CD8-positive, alpha-beta T cell (primary cell): ENCODE measurements at regions of chr18 and their contacts with region 1.

Region 1: GRCh38 chr18:62186774-62187542 is at the starts of genes PIGN and RELCH:
- DNase-seq: peak; percentile 89 to 99 (median 93)
- ATAC-seq: peak; percentile 91
- H3K4me3 ChIP-seq: peak within 1 kb of the TSS; percentile 92 to 99
- H3K4me3 Mint-ChIP-seq: peak within 1 kb of the TSS; percentile 100
- H3K27ac ChIP-seq: peak within 1 kb of the TSS; percentile 63 to 79
- H3K27ac Mint-ChIP-seq: peak within 1 kb of the TSS; percentile 97
- H3K4me1 ChIP-seq: peaks cover 43% of the 10 kb centered on the region
- H3K4me1 Mint-ChIP-seq: peaks cover 63% of the 10 kb centered on the region
- H3K27me3 ChIP-seq: no peaks in the 10 kb centered on the region
- H3K27me3 Mint-ChIP-seq: no peaks in the 10 kb centered on the region
- CTCF ChIP-seq: no peak
- total RNA-seq, gene PIGN: 8.1 to 9.9 TPM
- total RNA-seq, gene RELCH: 39.2 to 40.5 TPM

Region 2: DNA sequence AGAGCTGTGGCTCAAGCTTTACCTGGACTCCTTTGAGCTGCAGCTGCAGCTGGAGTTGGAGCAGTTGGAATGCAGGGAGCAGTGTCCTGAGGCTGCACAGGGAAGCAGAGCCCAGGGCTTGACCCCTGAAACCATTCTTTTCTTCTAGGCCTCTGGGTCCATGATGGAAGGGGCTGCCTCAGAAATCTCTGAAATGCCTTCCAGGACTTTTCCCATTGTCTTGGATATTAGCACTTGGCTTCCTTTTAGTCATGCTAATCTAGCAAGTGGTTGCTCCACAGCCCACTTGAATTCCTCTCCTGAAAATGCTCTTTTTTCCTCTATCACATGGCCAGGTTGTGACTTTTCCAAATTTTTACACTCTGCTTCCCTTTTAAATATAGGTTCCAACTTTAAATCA is 185.6 kb before region 1 on chr18:
- CTCF ChIA-PET with region 1: no interaction called
- POLR2A ChIA-PET with region 1: no interaction called
- intact Hi-C with region 1: no loop called
- DNase-seq: no peak
- ATAC-seq: no peak
- H3K4me3 ChIP-seq: no peak overlapping the region
- H3K4me3 Mint-ChIP-seq: no peak overlapping the region
- H3K27ac ChIP-seq: no peak overlapping the region
- H3K27ac Mint-ChIP-seq: no peak overlapping the region
- H3K4me1 ChIP-seq: no peaks in the 10 kb centered on the region
- H3K4me1 Mint-ChIP-seq: no peaks in the 10 kb centered on the region
- H3K27me3 ChIP-seq: no peaks in the 10 kb centered on the region
- H3K27me3 Mint-ChIP-seq: peaks cover under 1% of the 10 kb centered on the region
- CTCF ChIP-seq: no peak

Region 3: GRCh38 chr18:62201903-62202302 is 14.9 kb after region 1 on chr18:
- CTCF ChIA-PET with region 1: interaction called, 3 read pairs
- POLR2A ChIA-PET with region 1: interaction called, 6 read pairs
- intact Hi-C with region 1: loop called in 1 of 2 experiments (anchors 2 kb)
- DNase-seq: no peak
- ATAC-seq: no peak
- H3K4me3 ChIP-seq: no peak overlapping the region
- H3K4me3 Mint-ChIP-seq: no peak overlapping the region
- H3K27ac ChIP-seq: no peak overlapping the region
- H3K27ac Mint-ChIP-seq: no peak overlapping the region
- H3K4me1 ChIP-seq: peaks cover 7% of the 10 kb centered on the region
- H3K4me1 Mint-ChIP-seq: peaks cover 61% of the 10 kb centered on the region
- H3K27me3 ChIP-seq: no peaks in the 10 kb centered on the region
- H3K27me3 Mint-ChIP-seq: no peaks in the 10 kb centered on the region
- CTCF ChIP-seq: no peak

Region 4: GRCh38 chr18:62324917-62325805 is 138.2 kb after region 1 on chr18 and contains the start of gene TNFRSF11A:
- CTCF ChIA-PET with region 1: no interaction called
- POLR2A ChIA-PET with region 1: no interaction called
- intact Hi-C with region 1: loop called in 1 of 2 experiments (anchors 5 kb)
- DNase-seq: peak; percentile 35 to 69 (median 61)
- ATAC-seq: peak; percentile 90
- H3K4me3 ChIP-seq: peak within 1 kb of the TSS; percentile 45 to 51
- H3K4me3 Mint-ChIP-seq: peak within 1 kb of the TSS; percentile 80
- H3K27ac ChIP-seq: no peak within 1 kb of the TSS
- H3K27ac Mint-ChIP-seq: no peak within 1 kb of the TSS
- H3K4me1 ChIP-seq: peaks cover 24% of the 10 kb centered on the region
- H3K4me1 Mint-ChIP-seq: peaks cover 26% of the 10 kb centered on the region
- H3K27me3 ChIP-seq: peaks cover 25 to 27% of the 10 kb centered on the region in 2 experiments
- H3K27me3 Mint-ChIP-seq: peaks cover 71% of the 10 kb centered on the region
- CTCF ChIP-seq: peak; percentile 25
- total RNA-seq, gene TNFRSF11A: 0.03 to 0.28 TPM

Region 5: DNA sequence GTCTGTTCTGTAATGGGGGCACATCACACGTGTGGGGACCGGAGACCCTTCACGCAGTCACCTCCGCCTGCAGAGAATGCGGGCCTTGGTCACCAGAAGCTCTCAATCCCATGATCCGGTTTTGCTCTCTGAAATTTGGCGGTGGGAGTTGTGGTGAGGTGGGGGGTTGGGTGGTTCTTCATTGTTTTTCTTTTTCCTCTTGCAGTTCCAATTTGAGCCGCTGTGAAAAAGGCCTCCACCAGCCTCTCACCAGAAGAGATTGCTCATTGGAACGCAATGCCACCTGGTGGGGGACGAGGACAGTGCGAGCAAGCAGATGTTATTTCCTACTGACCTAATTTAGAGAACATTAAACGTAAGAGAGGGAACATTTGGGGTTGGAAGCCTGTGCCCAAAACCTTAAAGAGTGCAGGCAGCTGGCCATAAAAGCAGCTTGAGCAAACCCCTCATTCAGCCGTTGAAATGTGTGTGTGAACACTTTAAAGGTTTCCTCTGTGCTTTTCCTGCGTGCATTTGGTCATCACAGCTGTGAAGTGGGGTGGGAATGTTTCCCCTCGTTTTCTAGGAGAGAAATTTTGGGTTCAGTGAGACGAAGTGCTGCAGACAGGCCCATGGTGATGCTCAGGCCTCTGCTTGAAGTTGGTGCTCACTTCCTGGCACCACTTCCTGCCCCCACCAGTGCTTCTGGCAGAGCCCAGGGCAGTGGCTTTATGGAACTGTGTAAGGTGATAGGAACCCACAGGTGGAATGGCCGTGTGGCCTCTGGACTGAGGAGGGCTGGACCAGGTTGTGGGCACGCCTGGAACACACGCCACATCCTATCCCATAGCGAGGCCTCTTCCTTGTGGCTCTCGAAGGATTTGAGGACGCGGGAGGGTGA is 397.5 kb after region 1 on chr18:
- CTCF ChIA-PET with region 1: no interaction called
- POLR2A ChIA-PET with region 1: no interaction called
- intact Hi-C with region 1: loop called (anchors 1 kb)
- DNase-seq: peak; percentile 62 to 91 (median 83)
- ATAC-seq: peak; percentile 99
- H3K4me3 ChIP-seq: no peak overlapping the region
- H3K4me3 Mint-ChIP-seq: peak overlapping the region; percentile 33
- H3K27ac ChIP-seq: peak overlapping the region in 1 of 2 experiments; percentile 30
- H3K27ac Mint-ChIP-seq: peak overlapping the region; percentile 39
- H3K4me1 ChIP-seq: peaks cover 16% of the 10 kb centered on the region
- H3K4me1 Mint-ChIP-seq: peaks cover 29% of the 10 kb centered on the region
- H3K27me3 ChIP-seq: no peaks in the 10 kb centered on the region
- H3K27me3 Mint-ChIP-seq: no peaks in the 10 kb centered on the region
- CTCF ChIP-seq: peak; percentile 98

Region 6: DNA sequence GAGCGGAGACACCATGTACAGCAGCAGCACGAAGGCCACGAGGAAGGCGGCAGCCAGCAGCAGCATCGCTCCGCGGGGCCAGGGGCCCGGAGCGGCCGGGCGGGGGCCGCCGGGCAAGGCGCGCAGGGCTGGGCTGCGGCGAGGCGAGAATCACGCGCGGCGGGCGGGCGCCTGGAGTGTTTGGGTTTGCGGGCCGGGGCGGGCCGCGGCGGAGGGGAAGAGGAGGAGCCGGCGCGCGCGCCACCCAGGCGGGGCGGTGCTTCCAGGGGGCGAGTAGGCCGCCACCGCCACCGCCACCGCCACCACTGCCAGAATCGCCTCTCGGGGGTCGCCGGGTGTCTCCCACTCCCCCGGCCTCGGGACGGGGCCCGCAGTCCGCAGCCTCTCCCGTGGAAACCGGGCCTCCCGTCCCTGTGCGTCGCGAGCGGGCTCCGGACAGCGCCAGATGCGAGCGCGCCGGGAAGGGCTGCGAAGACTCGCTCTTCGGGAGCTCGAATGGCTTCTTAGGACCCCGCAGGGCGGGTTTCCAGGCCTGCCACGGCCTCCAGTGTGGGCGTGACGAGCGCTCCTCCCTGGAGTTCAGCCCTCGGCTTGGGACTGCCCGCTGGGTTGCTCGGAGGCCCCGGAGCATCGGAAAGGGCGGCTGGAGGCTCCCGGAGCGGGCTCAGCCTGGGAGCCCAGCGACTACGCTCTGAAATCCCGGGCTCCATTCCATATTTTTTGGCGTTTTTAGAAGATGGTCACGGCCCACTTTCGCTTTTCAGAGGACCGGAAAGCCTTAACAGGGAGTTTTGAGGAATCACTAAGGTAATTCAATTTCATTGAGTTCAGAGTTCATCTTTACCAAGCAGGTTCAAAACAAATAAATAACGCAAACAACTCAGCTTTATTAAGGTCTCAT is 1180.3 kb after region 1 on chr18 and contains the start of gene KDSR:
- CTCF ChIA-PET with region 1: no interaction called
- POLR2A ChIA-PET with region 1: no interaction called
- intact Hi-C with region 1: loop called in 1 of 2 experiments (anchors 1 kb)
- DNase-seq: peak; percentile 58 to 87 (median 78)
- ATAC-seq: peak; percentile 82
- H3K4me3 ChIP-seq: peak within 1 kb of the TSS; percentile 87 to 89
- H3K4me3 Mint-ChIP-seq: peak within 1 kb of the TSS; percentile 89
- H3K27ac ChIP-seq: peak within 1 kb of the TSS; percentile 63 to 65
- H3K27ac Mint-ChIP-seq: peak within 1 kb of the TSS; percentile 86
- H3K4me1 ChIP-seq: peaks cover 33% of the 10 kb centered on the region
- H3K4me1 Mint-ChIP-seq: peaks cover 45% of the 10 kb centered on the region
- H3K27me3 ChIP-seq: no peaks in the 10 kb centered on the region
- H3K27me3 Mint-ChIP-seq: no peaks in the 10 kb centered on the region
- CTCF ChIP-seq: no peak
- total RNA-seq, gene KDSR: 12.8 to 13.9 TPM